HAP-1 (cell line): ENCODE measurements at regions of chr7 and their contacts with region 1.

Region 1: GRCh38 chr7:112898432-112899290 is 108.5 kb upstream of the TMEM168 start:
- DNase-seq: peak; percentile 44 to 74
- H3K4me3 ChIP-seq: no peak overlapping the region
- H3K4me1 ChIP-seq: no peaks in the 10 kb centered on the region
- H3K27me3 ChIP-seq: no peaks in the 10 kb centered on the region

Region 2: DNA sequence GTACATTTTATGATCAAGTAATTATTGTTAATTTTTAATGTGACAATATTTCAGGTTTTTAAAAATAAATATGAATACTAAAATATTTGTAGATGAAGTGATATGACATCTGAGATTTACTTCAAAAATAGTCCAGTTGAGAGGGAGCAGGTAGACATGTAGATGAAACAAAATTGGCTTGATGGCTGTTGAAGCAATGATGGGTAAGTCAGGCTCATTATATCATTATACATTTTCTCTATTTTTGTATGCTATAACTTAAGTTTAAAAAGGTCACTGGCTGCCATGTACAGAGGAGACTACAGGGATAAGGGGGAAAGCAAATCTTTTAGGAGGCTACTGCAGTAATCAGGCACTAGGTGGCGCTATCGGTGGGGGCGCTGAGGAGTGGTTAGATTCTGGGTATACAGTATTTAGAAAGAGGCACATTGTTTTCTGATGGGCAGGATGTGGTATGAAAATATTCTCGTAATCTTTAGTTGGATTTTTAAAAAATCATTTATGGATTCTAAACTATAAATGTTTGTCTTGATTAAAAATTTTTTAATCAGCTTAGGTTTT is 1146.6 kb before region 1 on chr7:
- in situ Hi-C with region 1: loop called (anchors 25 kb)
- DNase-seq: peak; percentile 49 to 84
- H3K4me3 ChIP-seq: no peak overlapping the region
- H3K4me1 ChIP-seq: no peaks in the 10 kb centered on the region
- H3K27me3 ChIP-seq: no peaks in the 10 kb centered on the region

Region 3: GRCh38 chr7:112546723-112547513 is 351.7 kb before region 1 on chr7:
- in situ Hi-C with region 1: loop called (anchors 25 kb)
- DNase-seq: peak in 1 of 2 experiments; percentile 47
- H3K4me3 ChIP-seq: no peak overlapping the region
- H3K4me1 ChIP-seq: no peaks in the 10 kb centered on the region
- H3K27me3 ChIP-seq: no peaks in the 10 kb centered on the region; the same call in 1 of the 2 replicates